ENCODE measurements at regions of chr3 and their contacts with region 1.

Region 1: DNA sequence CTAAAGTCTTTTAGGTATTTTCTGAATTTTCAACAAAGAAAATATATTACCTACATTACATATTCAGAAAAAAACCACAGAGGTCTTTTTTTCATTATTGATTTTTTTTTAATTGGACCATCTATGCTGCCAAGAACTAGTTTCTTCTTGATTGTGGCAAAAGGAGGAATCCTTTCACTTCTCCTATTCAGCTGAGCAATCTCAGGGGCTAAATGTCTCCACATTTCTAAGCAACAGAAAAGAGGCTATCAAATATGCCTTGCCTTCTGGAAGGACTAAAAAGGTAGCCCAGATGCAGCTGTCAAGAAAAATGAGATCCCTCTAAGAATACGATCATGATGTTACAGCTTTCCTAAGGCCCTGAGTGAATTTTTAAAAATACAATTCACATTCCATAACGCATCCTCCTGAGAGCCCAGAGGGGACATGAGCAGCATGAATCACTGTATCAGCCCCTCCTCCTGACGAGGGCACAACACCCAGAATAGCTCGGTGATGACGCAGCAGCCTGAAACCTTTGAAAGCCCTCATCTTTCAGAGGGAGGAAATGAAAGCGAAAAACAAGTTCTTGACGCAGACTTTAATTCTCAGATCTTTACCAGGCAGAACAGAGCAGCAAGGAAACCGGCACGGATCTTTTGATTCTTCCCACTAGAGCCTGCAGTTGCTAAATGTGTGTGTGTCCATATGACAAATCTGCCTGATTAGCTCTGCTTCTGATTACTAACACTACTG is 24.6 kb downstream of the RUBCN start:
- DNase-seq: peak; percentile 97
- ATAC-seq: peak; percentile 87
- H3K4me3 ChIP-seq: peak overlapping the region; percentile 51
- H3K27ac ChIP-seq: peak overlapping the region; percentile 95
- H3K4me1 ChIP-seq: peaks cover 45% of the 10 kb centered on the region
- H3K27me3 ChIP-seq: no peaks in the 10 kb centered on the region
- CTCF ChIP-seq: no peak
- EP300 ChIP-seq: peak; percentile 98 to 100
- POLR2A ChIP-seq: peak; percentile 63
- RAD21 ChIP-seq: no peak

Region 2: DNA sequence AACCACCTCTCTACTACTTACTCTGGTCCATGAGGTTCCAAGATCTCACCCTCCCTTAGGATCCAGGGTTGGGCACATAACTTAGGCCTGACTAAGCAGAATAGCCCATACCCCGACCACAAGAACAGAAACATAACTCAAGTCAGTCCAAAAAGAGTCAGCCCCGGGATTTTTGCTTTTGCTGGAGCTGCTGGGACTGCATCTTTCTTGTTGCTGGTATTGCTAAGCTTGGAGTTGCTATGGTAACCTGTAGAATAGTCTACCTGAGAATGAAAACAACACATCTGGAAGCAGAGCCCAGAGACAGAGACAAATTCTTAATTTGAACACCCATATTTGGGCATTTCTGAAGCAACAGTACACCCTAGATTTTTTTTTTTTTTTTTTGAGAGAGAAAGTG is 18.1 kb after region 1 on chr3:
- CTCF ChIA-PET with region 1: interaction called, 37 read pairs
- POLR2A ChIA-PET with region 1: interaction called, 72 read pairs
- RAD21 ChIA-PET with region 1: interaction called, 59 read pairs
- SMC1A ChIA-PET with region 1: interaction called, 163 read pairs
- in situ Hi-C with region 1: no loop called
- intact Hi-C with region 1: loop called (anchors 1 kb)
- DNase-seq: no peak
- ATAC-seq: peak; percentile 28
- H3K4me3 ChIP-seq: 0 out of 2 replicates have a peak overlapping the region, but pooled peaks have one; percentile 2
- H3K27ac ChIP-seq: peak overlapping the region; percentile 61
- H3K4me1 ChIP-seq: peaks cover 26% of the 10 kb centered on the region
- H3K27me3 ChIP-seq: no peaks in the 10 kb centered on the region
- CTCF ChIP-seq: no peak
- EP300 ChIP-seq: no peak
- POLR2A ChIP-seq: no peak
- RAD21 ChIP-seq: no peak

Region 3: DNA sequence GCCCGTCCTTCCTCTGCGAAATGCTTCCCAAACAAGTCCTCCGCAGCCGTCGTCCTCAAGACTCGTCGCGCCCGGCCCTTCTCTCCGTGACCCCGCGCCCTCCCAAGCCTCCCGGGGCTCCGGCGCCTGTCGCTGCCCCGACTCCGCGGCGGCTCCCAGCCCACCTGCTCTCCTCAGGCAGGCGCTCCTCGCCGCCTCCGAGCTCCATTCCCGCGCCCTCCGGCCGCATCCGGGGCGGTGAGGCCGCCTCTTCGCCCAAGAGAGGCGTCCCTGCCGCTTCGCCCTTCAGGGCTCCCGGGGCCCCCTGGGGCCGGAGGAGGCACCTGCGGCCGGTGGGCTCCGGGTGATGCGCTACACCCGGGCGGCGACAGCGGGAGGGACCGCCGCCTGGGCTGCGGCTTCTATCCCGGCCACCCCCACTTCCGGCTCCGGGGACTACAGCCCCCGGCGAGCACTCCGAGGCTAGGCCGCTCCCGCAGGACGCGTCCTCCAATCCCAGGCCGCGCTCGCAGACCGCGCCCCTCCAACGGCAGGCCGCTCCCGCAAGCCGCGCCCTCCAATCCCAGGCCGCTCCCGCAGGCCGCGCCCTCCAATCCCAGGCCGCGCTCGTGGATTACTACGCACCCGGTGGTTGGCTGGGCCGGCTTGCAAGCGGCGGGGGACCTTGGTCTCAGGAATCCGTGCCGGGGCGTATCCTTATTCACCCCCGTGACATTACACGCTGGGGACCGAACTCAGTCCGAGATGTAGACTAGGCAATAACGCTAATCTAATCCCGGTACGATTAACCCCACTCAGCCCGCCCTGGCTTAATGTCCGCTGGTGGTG is 24.6 kb after region 1 on chr3 and contains the start of gene RUBCN:
- CTCF ChIA-PET with region 1: interaction called, 37 read pairs
- POLR2A ChIA-PET with region 1: interaction called, 72 read pairs
- RAD21 ChIA-PET with region 1: interaction called, 57 read pairs
- SMC1A ChIA-PET with region 1: interaction called, 127 read pairs
- in situ Hi-C with region 1: no loop called
- intact Hi-C with region 1: loop called (anchors 1 kb)
- DNase-seq: peak; percentile 81
- ATAC-seq: peak; percentile 88
- H3K4me3 ChIP-seq: peak within 1 kb of the TSS; percentile 81
- H3K27ac ChIP-seq: peak within 1 kb of the TSS; percentile 95
- H3K4me1 ChIP-seq: peaks cover 12% of the 10 kb centered on the region
- H3K27me3 ChIP-seq: no peaks in the 10 kb centered on the region
- CTCF ChIP-seq: no peak
- EP300 ChIP-seq: no peak; a peak in 1 of 4 replicates
- POLR2A ChIP-seq: peak; percentile 81
- RAD21 ChIP-seq: no peak
- polyA plus RNA-seq, gene RUBCN: 15.5 to 25.5 TPM

Region 4: GRCh38 chr3:197749601-197750395 is 37.7 kb after region 1 on chr3 and contains the start of gene FYTTD1:
- CTCF ChIA-PET with region 1: interaction called, 10 read pairs
- POLR2A ChIA-PET with region 1: interaction called, 5 read pairs
- RAD21 ChIA-PET with region 1: interaction called, 14 read pairs
- SMC1A ChIA-PET with region 1: interaction called, 15 read pairs
- in situ Hi-C with region 1: no loop called
- intact Hi-C with region 1: loop called (anchors 5 kb)
- DNase-seq: no peak
- ATAC-seq: peak; percentile 87
- H3K4me3 ChIP-seq: peak within 1 kb of the TSS; percentile 82
- H3K27ac ChIP-seq: peak within 1 kb of the TSS; percentile 84
- H3K4me1 ChIP-seq: peaks cover 19% of the 10 kb centered on the region
- H3K27me3 ChIP-seq: no peaks in the 10 kb centered on the region
- CTCF ChIP-seq: peak; percentile 47 to 63 (median 50); a peak in 5 of 6 replicates
- EP300 ChIP-seq: 0 out of 4 replicates have a peak, but pooled peaks of 1 of the 2 experiments have one; percentile 9
- POLR2A ChIP-seq: peak; percentile 75
- RAD21 ChIP-seq: peak; percentile 49
- polyA plus RNA-seq, gene FYTTD1: 25.5 to 35.5 TPM

Region 5: DNA sequence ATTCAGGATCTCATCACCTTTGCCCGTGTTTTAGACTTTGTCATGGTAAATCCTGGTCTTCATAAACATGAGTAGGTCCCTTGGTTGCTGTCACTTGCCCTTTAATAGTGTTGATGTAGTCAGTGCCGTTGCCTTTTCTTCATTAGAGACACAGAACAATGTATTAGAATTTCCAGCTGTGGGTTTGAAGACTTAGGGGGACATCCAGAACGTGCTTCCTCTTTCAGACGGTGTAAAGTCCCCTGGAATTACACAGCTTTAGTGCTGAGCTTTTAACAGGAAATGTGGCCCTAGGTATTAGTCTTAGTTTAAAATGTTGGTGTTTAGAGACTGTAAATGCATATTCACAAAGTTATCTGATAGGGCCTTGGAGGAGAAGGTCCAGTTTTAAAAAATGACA is 70.1 kb after region 1 on chr3:
- CTCF ChIA-PET with region 1: interaction called, 7 read pairs
- POLR2A ChIA-PET with region 1: interaction called, 8 read pairs
- RAD21 ChIA-PET with region 1: interaction called, 7 read pairs
- SMC1A ChIA-PET with region 1: interaction called, 12 read pairs
- in situ Hi-C with region 1: no loop called
- intact Hi-C with region 1: no loop called
- DNase-seq: peak; percentile 50
- ATAC-seq: peak; percentile 89
- H3K4me3 ChIP-seq: no peak overlapping the region
- H3K27ac ChIP-seq: peak overlapping the region; percentile 81
- H3K4me1 ChIP-seq: peaks cover 25% of the 10 kb centered on the region
- H3K27me3 ChIP-seq: no peaks in the 10 kb centered on the region
- CTCF ChIP-seq: no peak
- EP300 ChIP-seq: no peak
- POLR2A ChIP-seq: no peak
- RAD21 ChIP-seq: no peak

Region 6: GRCh38 chr3:197801891-197802778 is 90.0 kb after region 1 on chr3:
- CTCF ChIA-PET with region 1: interaction called, 12 read pairs
- POLR2A ChIA-PET with region 1: interaction called, 3 read pairs
- RAD21 ChIA-PET with region 1: interaction called, 5 read pairs
- SMC1A ChIA-PET with region 1: interaction called, 30 read pairs
- in situ Hi-C with region 1: no loop called
- intact Hi-C with region 1: no loop called
- DNase-seq: peak; percentile 40
- ATAC-seq: peak; percentile 68
- H3K4me3 ChIP-seq: peak overlapping the region; percentile 24; the same call in 1 of the 2 replicates
- H3K27ac ChIP-seq: peak overlapping the region; percentile 54
- H3K4me1 ChIP-seq: peaks cover 37% of the 10 kb centered on the region
- H3K27me3 ChIP-seq: no peaks in the 10 kb centered on the region
- CTCF ChIP-seq: peak; percentile 49 to 56 (median 51)
- EP300 ChIP-seq: no peak
- POLR2A ChIP-seq: no peak
- RAD21 ChIP-seq: peak; percentile 46